Activated CD4-positive, alpha-beta T cell treated with anti-CD3 and anti-CD28 coated beads for 36 hours (primary cell): ENCODE measurements at regions of chr3 and their contacts with region 1.

Region 1: GRCh38 chr3:11323813-11324212 is 51.6 kb downstream of the ATG7 start:
- DNase-seq: no peak
- ATAC-seq: no peak
- H3K4me3 Mint-ChIP-seq: no peak overlapping the region
- H3K27ac Mint-ChIP-seq: no peak overlapping the region
- H3K4me1 Mint-ChIP-seq: peaks cover 9% of the 10 kb centered on the region
- H3K27me3 Mint-ChIP-seq: no peaks in the 10 kb centered on the region

Region 2: DNA sequence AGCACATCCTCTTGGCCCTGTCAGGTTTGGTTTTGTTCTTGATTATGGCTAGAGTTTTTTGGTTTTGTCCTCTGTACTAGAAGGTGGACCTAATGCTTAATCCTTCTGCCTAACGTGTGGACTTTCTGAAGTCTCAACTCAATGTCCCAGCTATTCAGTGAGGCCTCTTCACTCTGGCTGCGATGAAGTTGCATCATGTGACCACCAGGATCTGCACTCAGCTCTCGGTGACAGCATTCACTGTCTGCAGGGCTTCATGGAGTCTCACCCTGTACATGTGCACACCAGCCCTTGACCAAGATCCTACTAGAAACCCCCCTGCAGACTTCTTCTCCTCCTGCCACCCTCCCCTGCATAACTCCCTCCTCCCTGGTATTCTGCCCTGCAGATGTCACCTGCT is 208.3 kb before region 1 on chr3:
- CTCF ChIA-PET with region 1: no interaction called
- POLR2A ChIA-PET with region 1: interaction called, 16 read pairs
- intact Hi-C with region 1: no loop called
- DNase-seq: no peak
- ATAC-seq: no peak
- H3K4me3 Mint-ChIP-seq: no peak overlapping the region
- H3K27ac Mint-ChIP-seq: no peak overlapping the region
- H3K4me1 Mint-ChIP-seq: no peaks in the 10 kb centered on the region
- H3K27me3 Mint-ChIP-seq: peaks cover 36% of the 10 kb centered on the region

Region 3: DNA sequence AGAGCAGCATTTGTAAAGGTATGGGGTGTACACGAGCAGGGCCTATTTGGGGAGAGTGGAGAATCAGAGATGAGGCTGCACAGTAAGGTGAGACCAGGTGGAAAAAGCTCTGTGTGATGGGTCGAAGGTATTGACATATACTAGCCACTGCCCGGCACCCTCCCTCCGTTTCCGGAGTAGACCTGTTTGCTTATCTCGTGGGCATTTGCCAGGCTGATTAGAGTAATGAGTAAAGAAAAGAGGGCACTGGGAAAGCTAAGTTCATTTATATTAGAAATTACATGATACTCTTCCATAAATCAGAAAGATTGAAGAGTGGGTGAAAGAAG is 97.8 kb before region 1 on chr3:
- CTCF ChIA-PET with region 1: no interaction called
- POLR2A ChIA-PET with region 1: no interaction called
- intact Hi-C with region 1: no loop called
- DNase-seq: no peak
- ATAC-seq: no peak
- H3K4me3 Mint-ChIP-seq: no peak overlapping the region
- H3K27ac Mint-ChIP-seq: peak overlapping the region; percentile 18
- H3K4me1 Mint-ChIP-seq: peaks cover 10% of the 10 kb centered on the region
- H3K27me3 Mint-ChIP-seq: no peaks in the 10 kb centered on the region